Colonic mucosa (tissue), 4 donors: ENCODE measurements at regions of chr6 and their contacts with region 1.

Region 1: GRCh38 chr6:125112934-125113333 is 40.6 kb upstream of the TPD52L1 start:
- DNase-seq: no peak
- H3K4me3 ChIP-seq: no peak overlapping the region
- H3K27ac ChIP-seq: no peak overlapping the region
- H3K4me1 ChIP-seq: no peaks in the 10 kb centered on the region
- H3K27me3 ChIP-seq: no peaks in the 10 kb centered on the region
- CTCF ChIP-seq: no peak

Region 2: DNA sequence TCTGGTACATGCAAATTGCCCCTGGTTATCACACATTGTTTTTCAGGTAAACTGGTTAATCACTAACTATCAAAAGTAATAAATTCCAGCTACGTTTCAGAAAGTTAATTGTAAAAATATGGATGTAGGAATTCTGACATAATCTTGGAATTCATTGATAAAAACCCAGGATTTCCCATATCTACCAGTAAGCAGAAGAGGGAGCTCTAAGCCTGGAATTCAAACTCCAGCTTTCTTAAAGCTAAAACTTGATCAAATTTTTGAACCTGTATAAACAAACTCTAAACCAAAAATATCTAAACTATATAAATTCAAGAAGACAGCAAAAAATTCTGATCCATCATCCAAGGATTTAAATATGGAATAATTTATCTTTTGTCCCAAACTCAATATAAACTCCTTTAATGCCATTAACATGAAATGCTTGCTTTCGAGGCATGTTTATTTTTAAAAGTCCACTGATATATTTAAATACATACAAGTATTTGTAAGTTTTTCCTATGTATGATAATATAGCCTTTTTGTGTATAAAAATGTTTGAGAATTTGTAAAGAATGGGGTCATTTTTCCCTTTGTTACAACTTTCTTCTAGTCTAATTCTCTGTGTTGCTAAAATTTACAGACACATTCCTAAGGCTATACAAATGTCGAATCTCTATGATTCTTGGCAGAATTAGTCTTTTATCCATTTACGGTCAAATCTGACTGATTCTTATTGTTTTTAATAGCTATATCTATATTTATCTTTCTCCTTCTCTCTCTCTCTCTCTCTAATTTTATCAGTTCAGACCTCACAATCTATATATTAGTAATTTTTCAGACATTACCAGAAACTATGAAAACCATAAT is 242.1 kb before region 1 on chr6:
- intact Hi-C with region 1: loop called (anchors 1 kb)
- DNase-seq: no peak
- H3K4me3 ChIP-seq: no peak overlapping the region
- H3K27ac ChIP-seq: no peak overlapping the region
- H3K4me1 ChIP-seq: no peaks in the 10 kb centered on the region
- H3K27me3 ChIP-seq: no peaks in the 10 kb centered on the region
- CTCF ChIP-seq: peak; percentile 62